PC-9 (cell line): ENCODE measurements at regions of chr2 and their contacts with region 1.

Region 1: GRCh38 chr2:196331143-196331542 is 159.8 kb upstream of the STK17B start:
- DNase-seq: peak; percentile 37 to 79
- H3K4me3 ChIP-seq: no peak overlapping the region
- H3K27ac ChIP-seq: peak overlapping the region; percentile 74
- H3K4me1 ChIP-seq: peaks cover 39% of the 10 kb centered on the region
- H3K27me3 ChIP-seq: no peaks in the 10 kb centered on the region
- CTCF ChIP-seq: no peak

Region 2: GRCh38 chr2:196162586-196163175 is 168.5 kb before region 1 on chr2:
- CTCF ChIA-PET with region 1: no interaction called
- POLR2A ChIA-PET with region 1: interaction called, 12 read pairs
- intact Hi-C with region 1: no loop called
- DNase-seq: no peak
- H3K4me3 ChIP-seq: no peak overlapping the region
- H3K27ac ChIP-seq: no peak overlapping the region
- H3K4me1 ChIP-seq: peaks cover 39% of the 10 kb centered on the region
- H3K27me3 ChIP-seq: no peaks in the 10 kb centered on the region
- CTCF ChIP-seq: no peak

Region 3: DNA sequence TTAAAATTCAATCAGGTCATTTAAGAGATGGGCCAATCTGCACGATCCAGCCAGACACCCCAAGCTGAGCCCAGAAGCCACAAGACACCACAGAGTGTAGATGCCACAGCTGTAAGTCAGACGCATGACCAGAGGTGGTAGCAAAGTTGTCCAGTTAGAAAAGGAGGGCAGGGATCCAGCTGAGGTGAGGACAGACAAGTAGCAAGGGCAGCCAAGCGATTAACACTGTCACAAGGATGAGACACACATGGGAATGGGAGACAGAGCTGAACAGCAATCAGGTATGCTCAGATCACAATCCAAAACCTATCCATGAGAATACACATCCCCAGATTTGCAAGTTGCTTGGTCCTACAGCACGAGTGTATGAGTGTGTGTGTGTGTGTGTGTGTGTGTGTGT is 16.4 kb before region 1 on chr2:
- CTCF ChIA-PET with region 1: no interaction called
- POLR2A ChIA-PET with region 1: no interaction called
- intact Hi-C with region 1: loop called (anchors 2 kb)
- DNase-seq: peak in 1 of 2 experiments; percentile 49
- H3K4me3 ChIP-seq: no peak overlapping the region
- H3K27ac ChIP-seq: no peak overlapping the region
- H3K4me1 ChIP-seq: peaks cover 29% of the 10 kb centered on the region
- H3K27me3 ChIP-seq: no peaks in the 10 kb centered on the region
- CTCF ChIP-seq: no peak